Common myeloid progenitor, CD34-positive (primary cell): ENCODE measurements at regions of chr11 and their contacts with region 1.

Region 1: GRCh38 chr11:10181811-10182210 is 112.2 kb downstream of the SBF2 start:
- DNase-seq: peak; percentile 60 to 85 (median 78)
- H3K4me3 ChIP-seq: no peak overlapping the region
- H3K27ac ChIP-seq: peak overlapping the region in 1 of 2 experiments; percentile 75
- H3K4me1 ChIP-seq: peaks cover 0 to 5% (median 0%) of the 10 kb centered on the region in 4 experiments
- H3K27me3 ChIP-seq: no peaks in the 10 kb centered on the region

Region 2: GRCh38 chr11:10139656-10140055 is 42.2 kb before region 1 on chr11:
- CTCF ChIA-PET with region 1: no interaction called
- POLR2A ChIA-PET with region 1: no interaction called
- DNase-seq: no peak
- H3K4me3 ChIP-seq: no peak overlapping the region
- H3K27ac ChIP-seq: no peak overlapping the region
- H3K4me1 ChIP-seq: no peaks in the 10 kb centered on the region
- H3K27me3 ChIP-seq: no peaks in the 10 kb centered on the region

Region 3: DNA sequence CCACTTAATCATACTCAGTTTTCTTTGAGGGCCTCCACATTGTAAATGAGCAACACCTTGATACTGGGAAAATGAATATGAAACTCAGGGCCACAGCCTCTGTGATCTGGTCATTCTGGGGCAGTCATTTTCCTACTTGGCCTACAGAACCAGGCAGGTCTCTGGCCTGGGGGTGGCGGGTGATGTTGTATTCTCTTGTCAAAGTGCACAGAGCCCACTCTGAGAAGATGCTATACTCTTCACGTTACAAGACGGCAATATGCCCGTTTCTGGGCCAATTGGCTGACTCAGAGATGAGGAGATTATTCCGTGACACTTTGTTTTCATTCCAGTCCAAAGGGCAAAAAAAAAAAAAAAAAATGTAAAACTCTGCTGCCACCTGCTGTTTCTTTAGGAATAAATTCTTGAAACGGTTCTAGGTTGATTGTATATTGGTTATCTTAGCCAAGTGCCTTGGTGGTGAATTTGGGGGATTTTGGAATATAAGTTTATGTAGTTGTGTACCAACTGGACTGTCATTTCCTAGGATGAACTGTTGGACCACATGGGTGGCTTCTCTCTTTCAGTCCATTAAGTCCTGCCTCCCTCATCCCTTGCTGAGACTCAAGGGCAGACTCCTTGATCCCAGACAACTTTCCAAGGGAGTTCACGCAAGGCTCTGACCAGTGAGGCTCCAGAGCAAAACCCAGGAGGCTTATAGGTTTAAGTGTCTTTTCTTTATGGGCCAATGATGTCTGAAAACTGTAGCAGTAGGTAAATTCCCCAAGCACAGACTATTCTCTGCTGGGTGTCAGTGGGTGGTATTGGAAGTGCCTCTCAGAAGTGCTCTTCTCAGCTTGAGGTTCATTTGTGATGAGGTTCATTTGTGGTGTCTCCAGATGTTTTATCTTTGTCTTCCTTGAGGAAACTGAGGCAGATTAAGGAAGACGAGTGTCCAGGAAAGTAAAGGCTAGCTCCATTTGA is 141.3 kb after region 1 on chr11:
- CTCF ChIA-PET with region 1: interaction called, 15 read pairs
- POLR2A ChIA-PET with region 1: no interaction called
- DNase-seq: peak; percentile 78 to 88 (median 87)
- H3K4me3 ChIP-seq: peak overlapping the region in 1 of 7 experiments; percentile 63
- H3K27ac ChIP-seq: no peak overlapping the region
- H3K4me1 ChIP-seq: peaks cover 0 to 16% (median 5%) of the 10 kb centered on the region in 4 experiments
- H3K27me3 ChIP-seq: no peaks in the 10 kb centered on the region